Activated CD4-positive, alpha-beta T cell treated with anti-CD3 and anti-CD28 coated beads, Interleukin-2, amount 10 ng/mL, durations not matched to agents 7 days and 5 days (primary cell): ENCODE measurements at regions of chr2 and their contacts with region 1.

Region 1: GRCh38 chr2:200963124-200963917 is at the start of gene ORC2:
- DNase-seq: peak; percentile 93
- H3K4me3 Mint-ChIP-seq: peak within 1 kb of the TSS; percentile 93
- H3K27ac Mint-ChIP-seq: peak within 1 kb of the TSS; percentile 98
- H3K4me1 Mint-ChIP-seq: peaks cover 66% of the 10 kb centered on the region
- H3K27me3 Mint-ChIP-seq: no peaks in the 10 kb centered on the region
- total RNA-seq, gene ORC2: 49.2 to 52.6 TPM

Region 2: GRCh38 chr2:200899482-200899881 is 63.8 kb before region 1 on chr2:
- CTCF ChIA-PET with region 1: no interaction called
- POLR2A ChIA-PET with region 1: no interaction called
- DNase-seq: no peak
- H3K4me3 Mint-ChIP-seq: no peak overlapping the region
- H3K27ac Mint-ChIP-seq: no peak overlapping the region
- H3K4me1 Mint-ChIP-seq: peaks cover 12% of the 10 kb centered on the region
- H3K27me3 Mint-ChIP-seq: no peaks in the 10 kb centered on the region

Region 3: DNA sequence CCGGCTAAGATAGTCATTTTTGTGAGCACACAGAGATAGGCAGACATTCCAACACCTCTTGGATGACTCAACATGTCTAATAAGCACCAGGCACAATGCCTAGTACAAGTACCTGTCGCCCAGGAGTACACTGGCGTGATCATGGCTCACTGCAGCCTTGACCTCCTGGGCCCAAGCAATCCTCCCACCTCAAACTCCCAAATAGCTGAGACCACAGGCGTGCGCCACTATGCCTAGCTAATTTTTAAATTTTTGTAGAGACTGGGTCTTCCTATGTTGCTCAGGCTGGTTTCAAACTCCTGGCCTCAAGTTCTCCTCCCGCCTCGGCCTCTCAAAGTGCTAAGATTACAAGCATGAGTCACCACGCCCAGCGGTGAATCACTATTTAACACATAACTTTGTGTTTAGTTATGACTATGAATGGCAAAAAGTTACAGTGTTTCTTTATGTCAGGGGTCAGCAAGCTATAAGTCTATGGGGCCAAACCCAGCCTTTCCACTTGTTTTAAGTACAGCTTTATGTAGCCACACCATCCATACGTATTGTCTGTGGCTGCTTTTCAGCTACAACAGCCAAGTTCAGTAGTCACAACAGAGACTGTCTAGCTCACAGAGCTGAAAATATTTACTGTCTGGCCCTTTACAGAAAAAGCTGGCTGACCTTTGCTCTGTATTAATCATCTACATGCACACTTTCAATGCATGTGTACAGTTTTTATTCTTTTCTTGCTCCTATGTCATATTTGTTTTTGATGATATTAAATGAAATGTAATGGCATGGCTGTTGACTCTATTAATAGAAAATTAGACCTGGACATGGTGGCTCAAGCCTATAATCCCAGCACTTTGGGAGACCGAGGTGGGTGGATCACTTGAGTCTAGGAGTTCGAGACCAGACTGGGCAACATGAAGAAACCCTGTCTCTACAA is 18.6 kb before region 1 on chr2:
- CTCF ChIA-PET with region 1: interaction called, 13 read pairs
- POLR2A ChIA-PET with region 1: no interaction called
- DNase-seq: peak; percentile 12
- H3K4me3 Mint-ChIP-seq: no peak overlapping the region
- H3K27ac Mint-ChIP-seq: peak overlapping the region; percentile 6
- H3K4me1 Mint-ChIP-seq: peaks cover 14% of the 10 kb centered on the region
- H3K27me3 Mint-ChIP-seq: no peaks in the 10 kb centered on the region

Region 4: GRCh38 chr2:200975672-200976071 is 12.4 kb after region 1 on chr2:
- CTCF ChIA-PET with region 1: interaction called, 42 read pairs
- POLR2A ChIA-PET with region 1: no interaction called
- DNase-seq: no peak
- H3K4me3 Mint-ChIP-seq: no peak overlapping the region
- H3K27ac Mint-ChIP-seq: no peak overlapping the region
- H3K4me1 Mint-ChIP-seq: no peaks in the 10 kb centered on the region
- H3K27me3 Mint-ChIP-seq: no peaks in the 10 kb centered on the region

Region 5: DNA sequence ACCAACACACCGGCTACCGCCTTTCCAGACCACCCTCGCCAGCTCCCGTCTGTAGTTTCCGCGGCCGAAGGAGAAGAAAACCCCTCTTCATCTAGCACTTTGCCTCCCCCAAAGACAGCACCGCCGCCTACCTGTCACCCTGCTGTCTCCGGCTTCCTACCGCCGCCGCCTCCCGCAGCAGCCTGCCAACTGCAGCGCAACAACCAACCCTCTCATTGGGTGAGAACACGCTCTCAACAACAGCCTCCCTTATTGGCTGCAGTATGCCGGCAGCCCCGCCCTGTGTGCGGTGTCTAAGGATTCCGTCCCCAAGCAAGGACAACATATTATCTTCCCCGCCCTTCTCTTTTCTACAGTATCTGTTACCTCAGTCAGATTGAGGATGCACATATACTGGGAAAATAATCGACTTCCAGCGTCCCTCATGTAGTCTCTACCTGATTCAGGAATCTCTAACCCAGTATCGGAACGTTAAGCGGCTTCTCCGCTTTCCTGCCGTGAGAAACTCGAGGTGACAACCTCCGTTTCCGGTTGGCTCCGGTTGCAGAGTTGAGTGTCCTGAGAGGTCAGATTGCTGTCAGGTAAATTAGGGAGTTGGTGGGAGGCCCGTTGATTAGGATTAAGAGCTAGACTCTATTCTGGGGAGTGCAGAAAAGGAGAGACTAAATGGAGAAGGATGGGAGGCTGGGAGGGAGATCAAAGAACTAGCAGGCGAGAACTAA is 108.3 kb after region 1 on chr2 and contains the starts of genes HYCC2 and NDUFB3:
- CTCF ChIA-PET with region 1: interaction called, 10 read pairs
- POLR2A ChIA-PET with region 1: no interaction called
- DNase-seq: peak; percentile 94
- H3K4me3 Mint-ChIP-seq: peak within 1 kb of the TSS; percentile 86
- H3K27ac Mint-ChIP-seq: peak within 1 kb of the TSS; percentile 96
- H3K4me1 Mint-ChIP-seq: peaks cover 52% of the 10 kb centered on the region
- H3K27me3 Mint-ChIP-seq: no peaks in the 10 kb centered on the region
- total RNA-seq, gene HYCC2: 31.4 to 32.0 TPM
- total RNA-seq, gene NDUFB3: 134 to 147 TPM

Region 6: DNA sequence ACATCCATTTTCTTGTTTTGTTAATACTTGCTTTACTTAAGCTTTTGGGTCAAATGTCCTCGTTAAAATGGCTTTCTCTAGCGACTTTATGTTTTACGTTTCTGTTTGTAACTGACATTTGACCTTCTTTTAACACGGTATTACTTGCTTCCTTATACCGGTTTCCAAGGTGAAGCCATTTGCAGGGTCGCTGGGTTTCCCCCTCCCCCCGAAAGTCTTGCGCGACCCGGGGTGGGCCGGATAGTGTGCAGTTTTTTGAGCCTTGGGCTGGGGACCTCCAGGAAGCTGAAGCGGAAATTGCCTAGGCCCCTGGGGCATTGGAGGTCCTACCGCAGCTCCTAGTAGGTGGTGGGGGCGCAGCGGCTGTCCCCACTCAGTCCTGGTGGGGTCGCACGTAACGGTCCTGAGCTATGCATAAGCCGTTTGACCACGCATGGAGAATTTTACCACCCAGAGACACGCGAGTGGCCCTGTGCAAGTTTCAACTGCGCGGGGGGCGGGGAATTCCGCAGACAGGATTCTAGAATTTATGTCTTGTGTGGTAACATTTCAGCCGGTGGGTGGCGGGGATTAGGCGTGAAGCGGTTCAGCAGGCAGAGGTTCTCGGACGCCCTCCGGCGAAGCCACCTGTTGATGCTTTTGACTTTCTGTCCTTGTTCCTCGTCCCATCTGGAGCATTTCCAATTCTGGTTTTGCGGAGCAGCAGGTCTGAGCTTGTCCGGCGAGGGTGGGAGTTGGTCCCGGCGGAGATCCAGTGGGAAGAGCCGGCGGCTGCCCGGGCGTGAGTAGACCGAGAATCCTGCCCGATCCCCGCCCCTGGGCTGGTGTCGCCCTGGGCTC is 155.0 kb after region 1 on chr2:
- CTCF ChIA-PET with region 1: interaction called, 13 read pairs
- POLR2A ChIA-PET with region 1: no interaction called
- DNase-seq: peak; percentile 90
- H3K4me3 Mint-ChIP-seq: peak overlapping the region; percentile 91
- H3K27ac Mint-ChIP-seq: peak overlapping the region; percentile 97
- H3K4me1 Mint-ChIP-seq: peaks cover 64% of the 10 kb centered on the region
- H3K27me3 Mint-ChIP-seq: no peaks in the 10 kb centered on the region